Transverse colon (tissue), 4 donors: ENCODE measurements at regions of chr3 and their contacts with region 1.

Region 1: DNA sequence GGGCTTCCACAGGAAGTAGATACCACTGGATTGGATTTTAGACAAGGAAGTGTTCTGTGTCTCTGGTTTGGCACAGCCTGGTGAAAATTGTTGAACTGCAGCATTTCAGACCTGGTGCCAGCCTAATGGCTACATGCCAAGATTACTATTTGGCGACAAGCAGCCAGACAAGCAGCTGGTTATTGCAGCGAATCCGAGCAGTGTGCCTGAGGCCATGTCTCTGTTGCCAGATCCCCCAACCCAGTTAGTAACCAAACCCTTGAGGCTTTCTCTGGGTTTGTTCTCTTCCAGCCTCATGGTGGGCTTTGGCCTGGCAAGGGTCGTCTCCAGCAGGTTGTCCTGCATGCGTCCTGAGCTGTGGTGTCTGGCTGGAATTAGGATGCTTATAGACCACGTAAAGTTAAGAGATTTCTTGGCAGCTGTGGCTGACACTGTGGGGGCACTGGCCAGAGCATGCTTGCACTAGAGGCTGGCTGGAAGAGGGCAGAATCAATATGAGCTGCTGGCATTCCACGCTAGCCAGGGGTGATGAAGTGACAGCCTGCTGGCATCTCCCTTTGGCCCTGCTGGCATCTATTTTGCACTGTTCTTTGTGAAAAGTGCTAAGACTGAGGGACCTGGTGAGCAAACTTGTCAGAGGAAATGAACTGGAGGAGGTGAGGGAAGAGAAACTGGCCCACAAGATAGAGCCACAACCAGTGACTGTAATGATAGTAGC is 172.6 kb downstream of the RBMS3 start:
- DNase-seq: peak; percentile 28
- H3K4me3 ChIP-seq: no peak overlapping the region
- H3K27ac ChIP-seq: no peak overlapping the region
- H3K4me1 ChIP-seq: peaks cover 0 to 11% (median 10%) of the 10 kb centered on the region in 4 donors
- H3K27me3 ChIP-seq: no peaks in the 10 kb centered on the region
- CTCF ChIP-seq: no peak
- EP300 ChIP-seq: no peak
- POLR2A ChIP-seq: no peak

Region 2: DNA sequence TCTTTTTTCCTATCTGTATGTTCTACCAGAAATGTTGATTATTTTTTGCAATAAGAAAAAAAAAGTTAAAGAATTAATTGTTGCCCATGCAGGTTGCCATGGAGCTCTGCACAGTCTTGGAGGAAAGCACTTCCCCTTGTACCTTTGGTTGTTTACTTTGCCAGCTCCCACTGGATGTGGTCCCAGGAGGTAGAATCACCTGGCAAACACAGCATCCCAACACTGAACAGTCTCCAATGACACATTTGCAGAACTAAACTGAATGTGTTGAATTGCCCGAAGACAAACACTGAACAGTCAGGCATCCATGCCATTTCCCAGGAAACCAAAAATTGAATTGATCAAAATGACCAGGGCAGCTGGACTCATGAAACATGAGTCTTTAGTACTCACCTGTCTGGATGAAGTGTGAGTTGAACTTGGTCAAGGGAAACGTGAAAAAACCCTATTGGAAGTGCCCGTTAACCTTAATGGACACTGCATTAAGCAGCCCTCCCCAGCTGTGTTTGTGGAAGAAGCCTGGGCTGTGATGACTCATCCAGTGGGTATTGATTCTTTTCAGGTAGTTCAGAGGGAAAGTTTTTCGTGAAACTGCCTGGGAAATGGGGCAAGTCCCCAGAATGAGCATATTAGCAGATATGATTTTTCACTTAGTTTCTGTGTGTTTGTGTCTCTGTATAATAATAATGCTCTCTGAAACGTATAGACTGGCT is 1794.6 kb after region 1 on chr3:
- in situ Hi-C with region 1: no loop called
- intact Hi-C with region 1: loop called (anchors 5 kb)
- DNase-seq: no peak
- H3K4me3 ChIP-seq: no peak overlapping the region
- H3K27ac ChIP-seq: no peak overlapping the region
- H3K4me1 ChIP-seq: no peaks in the 10 kb centered on the region
- H3K27me3 ChIP-seq: no peaks in the 10 kb centered on the region
- CTCF ChIP-seq: no peak
- EP300 ChIP-seq: no peak
- POLR2A ChIP-seq: no peak